ENCODE measurements at regions of chr12 and their contacts with region 1.

Region 1: DNA sequence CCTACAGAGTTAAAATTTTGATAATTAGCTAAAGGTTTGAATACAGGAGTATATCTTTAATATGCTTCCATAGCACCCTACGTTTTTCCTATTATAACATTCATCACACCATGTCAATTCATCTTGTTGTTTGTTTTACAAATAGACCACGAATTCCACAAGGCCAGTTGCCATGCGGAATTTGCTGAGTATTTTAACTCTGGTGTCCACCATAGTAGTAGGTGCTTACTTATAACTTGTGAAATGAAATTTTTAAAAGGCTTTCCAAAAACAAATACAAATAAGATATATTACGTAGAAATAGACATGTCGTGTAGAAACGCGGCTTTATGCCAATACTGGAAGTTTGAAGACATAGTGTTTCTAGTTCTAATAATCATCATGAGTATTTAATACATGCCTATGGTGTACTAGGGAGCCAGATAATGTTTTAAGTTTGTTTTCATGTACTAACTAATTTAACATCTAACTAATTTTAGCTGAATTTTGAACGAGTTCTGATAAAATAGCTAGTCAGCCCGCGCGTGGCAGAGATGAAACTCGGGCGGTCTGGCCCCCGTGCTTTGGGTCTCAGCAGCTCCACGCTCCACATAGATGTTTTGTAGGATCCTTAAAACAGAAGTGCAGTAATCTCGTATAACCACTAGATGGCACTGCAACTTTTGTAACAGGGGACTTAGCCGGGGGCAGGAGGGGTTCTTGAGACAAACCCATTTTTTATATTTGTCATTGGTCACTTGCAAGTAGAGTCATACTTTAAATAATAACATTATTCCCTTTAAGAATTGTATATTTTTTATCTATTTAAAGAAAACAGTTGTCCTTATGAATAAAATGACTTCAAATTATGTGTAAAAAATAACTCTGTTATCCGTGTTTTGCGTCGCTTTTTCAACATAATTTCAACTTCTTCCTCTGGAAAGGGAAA is 10.2 kb downstream of the CD69 start:
- DNase-seq: peak; percentile 68
- H3K4me3 Mint-ChIP-seq: peak overlapping the region; percentile 74
- H3K27ac Mint-ChIP-seq: peak overlapping the region; percentile 71
- H3K4me1 Mint-ChIP-seq: peaks cover 44% of the 10 kb centered on the region
- H3K27me3 Mint-ChIP-seq: no peaks in the 10 kb centered on the region

Region 2: GRCh38 chr12:9331218-9331626 is 419.3 kb before region 1 on chr12:
- CTCF ChIA-PET with region 1: interaction called, 3 read pairs
- intact Hi-C with region 1: loop called (anchors 2 kb)
- DNase-seq: peak; percentile 78
- H3K4me3 Mint-ChIP-seq: no peak overlapping the region
- H3K27ac Mint-ChIP-seq: no peak overlapping the region
- H3K4me1 Mint-ChIP-seq: peaks cover 15% of the 10 kb centered on the region
- H3K27me3 Mint-ChIP-seq: no peaks in the 10 kb centered on the region

Region 3: DNA sequence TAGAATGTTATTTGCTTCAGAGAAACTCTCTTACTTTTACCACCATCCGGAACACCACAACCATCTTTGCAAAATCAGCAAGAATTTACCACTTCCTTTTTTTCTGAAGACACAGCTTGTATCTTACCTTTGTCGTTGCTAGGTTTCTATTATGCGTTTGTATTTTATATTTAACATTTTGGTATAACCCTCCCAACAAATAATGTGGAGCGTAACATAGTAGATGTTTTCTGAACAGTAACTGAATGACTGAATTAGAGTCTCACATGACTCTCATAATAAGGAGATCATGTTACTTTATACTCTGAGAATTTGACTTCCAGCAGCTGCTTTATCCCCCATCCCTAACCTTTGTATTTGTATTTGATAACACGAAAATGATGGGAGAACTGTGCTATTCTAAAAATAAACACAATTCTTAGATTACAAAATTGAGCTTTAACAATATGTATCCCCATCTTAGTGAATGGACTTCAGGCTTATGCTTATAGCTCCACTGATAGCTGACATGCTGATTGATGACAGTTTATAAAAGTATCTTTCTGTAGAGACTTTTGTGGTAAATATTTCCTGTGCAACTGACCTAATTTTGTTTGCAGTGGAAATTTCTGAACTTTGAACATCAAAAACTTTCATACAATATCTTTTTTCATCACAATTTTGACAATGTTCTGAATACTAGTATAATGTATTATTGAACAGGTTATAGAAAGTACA is 135.0 kb before region 1 on chr12:
- CTCF ChIA-PET with region 1: no interaction called
- intact Hi-C with region 1: no loop called
- DNase-seq: no peak
- H3K4me3 Mint-ChIP-seq: peak overlapping the region; percentile 34
- H3K27ac Mint-ChIP-seq: peak overlapping the region; percentile 65
- H3K4me1 Mint-ChIP-seq: peaks cover 54% of the 10 kb centered on the region
- H3K27me3 Mint-ChIP-seq: no peaks in the 10 kb centered on the region

Region 4: DNA sequence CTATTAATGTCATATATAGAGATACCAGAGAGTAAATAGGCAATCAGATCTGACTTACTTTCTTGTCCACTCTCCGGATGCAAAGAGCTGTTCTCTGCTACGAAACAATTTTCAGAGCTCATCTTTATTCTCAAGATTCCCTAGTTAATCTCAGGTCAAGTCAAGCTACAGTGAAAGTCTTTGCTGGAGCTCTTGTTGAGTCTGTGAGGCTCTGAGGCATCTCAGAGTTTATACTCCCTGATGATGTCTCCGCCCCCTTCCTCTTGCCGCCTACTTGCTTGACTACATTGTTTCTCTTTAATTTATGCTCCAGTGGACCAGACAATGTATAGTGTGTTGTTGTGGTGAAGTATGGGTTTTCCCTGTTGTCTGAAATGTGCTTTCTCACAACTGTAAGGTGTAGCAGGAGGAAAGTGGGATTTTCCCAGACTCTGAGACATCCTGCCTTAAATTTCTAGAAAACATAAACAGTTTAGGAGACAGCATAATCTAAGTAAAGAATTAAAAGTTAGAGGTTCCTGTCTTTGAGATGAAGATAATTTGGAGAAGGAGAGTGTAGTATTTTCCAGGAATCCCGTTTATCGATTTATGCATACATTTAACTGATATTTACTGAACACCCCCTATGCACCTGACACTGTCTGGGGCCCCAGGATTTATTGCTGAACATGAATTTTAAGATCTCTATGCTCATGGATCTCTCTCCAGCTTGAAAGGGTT is 10.3 kb after region 1 on chr12 and contains the start of gene CD69:
- CTCF ChIA-PET with region 1: interaction called, 42 read pairs
- intact Hi-C with region 1: loop called (anchors 1 kb)
- DNase-seq: peak; percentile 88
- H3K4me3 Mint-ChIP-seq: peak within 1 kb of the TSS; percentile 95
- H3K27ac Mint-ChIP-seq: peak within 1 kb of the TSS; percentile 99
- H3K4me1 Mint-ChIP-seq: peaks cover 36% of the 10 kb centered on the region
- H3K27me3 Mint-ChIP-seq: no peaks in the 10 kb centered on the region
- total RNA-seq, gene CD69: 150 to 153 TPM

Region 5: DNA sequence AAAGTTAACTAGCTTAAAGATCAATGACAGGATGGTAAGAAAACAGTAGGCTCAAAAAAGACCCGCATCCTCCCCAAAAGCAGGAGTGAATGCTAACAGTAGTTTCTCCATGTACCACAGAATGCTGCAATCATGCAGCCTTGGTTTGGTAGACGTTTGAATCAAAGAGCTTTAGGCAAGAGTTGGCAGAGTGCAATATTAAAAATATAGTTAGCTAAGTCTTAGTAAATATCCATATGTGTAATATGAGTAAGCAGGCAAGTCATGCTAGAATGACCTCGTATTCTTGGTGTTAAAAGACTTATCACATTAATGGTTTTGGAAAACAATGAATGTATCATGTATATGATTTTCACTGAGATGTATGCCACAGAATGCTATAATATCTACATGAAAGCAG is 58.0 kb after region 1 on chr12:
- CTCF ChIA-PET with region 1: interaction called, 537 read pairs
- intact Hi-C with region 1: no loop called
- DNase-seq: no peak
- H3K4me3 Mint-ChIP-seq: no peak overlapping the region
- H3K27ac Mint-ChIP-seq: no peak overlapping the region
- H3K4me1 Mint-ChIP-seq: peaks cover 5% of the 10 kb centered on the region
- H3K27me3 Mint-ChIP-seq: no peaks in the 10 kb centered on the region

Region 6: GRCh38 chr12:9827209-9827888 is 76.8 kb after region 1 on chr12 and contains the start of gene KLRF1:
- CTCF ChIA-PET with region 1: interaction called, 13 read pairs
- intact Hi-C with region 1: no loop called
- DNase-seq: no peak
- H3K4me3 Mint-ChIP-seq: no peak within 1 kb of the TSS
- H3K27ac Mint-ChIP-seq: no peak within 1 kb of the TSS
- H3K4me1 Mint-ChIP-seq: no peaks in the 10 kb centered on the region
- H3K27me3 Mint-ChIP-seq: no peaks in the 10 kb centered on the region
- total RNA-seq, gene KLRF1: not detected

Region 7: DNA sequence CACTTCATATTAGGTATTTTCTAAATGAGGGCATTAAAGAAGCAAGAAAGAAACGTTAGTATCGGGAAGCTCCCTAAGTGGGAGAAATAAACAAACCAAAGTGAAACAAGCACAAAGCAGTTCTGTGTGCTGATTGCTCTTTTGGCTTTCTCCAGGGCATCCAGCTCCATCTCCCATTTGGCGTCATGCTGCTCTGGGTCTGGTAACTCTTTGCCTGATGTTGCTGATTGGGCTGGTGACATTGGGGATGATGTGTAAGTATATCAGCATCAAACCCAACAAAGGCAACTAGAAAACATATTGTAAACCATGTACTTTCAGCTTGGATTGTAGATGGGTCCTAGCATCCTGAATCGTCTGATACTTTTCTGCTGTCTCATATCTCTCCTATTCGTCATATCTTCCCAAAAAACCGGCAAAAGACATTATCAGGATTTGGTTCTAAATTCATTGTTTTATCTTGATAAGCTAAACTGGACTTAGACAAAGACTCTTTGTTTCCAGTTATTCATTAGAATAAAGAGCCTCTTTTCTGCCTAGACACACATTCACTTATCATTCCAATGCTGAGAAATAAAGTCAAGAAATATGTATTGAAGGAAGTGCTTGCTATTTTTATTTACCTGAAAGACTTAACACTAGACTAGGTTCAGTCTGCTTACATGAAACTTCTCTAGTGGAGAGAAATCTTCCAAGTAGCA is 262.2 kb after region 1 on chr12:
- CTCF ChIA-PET with region 1: interaction called, 7 read pairs
- intact Hi-C with region 1: loop called (anchors 1 kb)
- DNase-seq: no peak
- H3K4me3 Mint-ChIP-seq: no peak overlapping the region
- H3K27ac Mint-ChIP-seq: no peak overlapping the region
- H3K4me1 Mint-ChIP-seq: no peaks in the 10 kb centered on the region
- H3K27me3 Mint-ChIP-seq: peaks cover 6% of the 10 kb centered on the region

Region 8: DNA sequence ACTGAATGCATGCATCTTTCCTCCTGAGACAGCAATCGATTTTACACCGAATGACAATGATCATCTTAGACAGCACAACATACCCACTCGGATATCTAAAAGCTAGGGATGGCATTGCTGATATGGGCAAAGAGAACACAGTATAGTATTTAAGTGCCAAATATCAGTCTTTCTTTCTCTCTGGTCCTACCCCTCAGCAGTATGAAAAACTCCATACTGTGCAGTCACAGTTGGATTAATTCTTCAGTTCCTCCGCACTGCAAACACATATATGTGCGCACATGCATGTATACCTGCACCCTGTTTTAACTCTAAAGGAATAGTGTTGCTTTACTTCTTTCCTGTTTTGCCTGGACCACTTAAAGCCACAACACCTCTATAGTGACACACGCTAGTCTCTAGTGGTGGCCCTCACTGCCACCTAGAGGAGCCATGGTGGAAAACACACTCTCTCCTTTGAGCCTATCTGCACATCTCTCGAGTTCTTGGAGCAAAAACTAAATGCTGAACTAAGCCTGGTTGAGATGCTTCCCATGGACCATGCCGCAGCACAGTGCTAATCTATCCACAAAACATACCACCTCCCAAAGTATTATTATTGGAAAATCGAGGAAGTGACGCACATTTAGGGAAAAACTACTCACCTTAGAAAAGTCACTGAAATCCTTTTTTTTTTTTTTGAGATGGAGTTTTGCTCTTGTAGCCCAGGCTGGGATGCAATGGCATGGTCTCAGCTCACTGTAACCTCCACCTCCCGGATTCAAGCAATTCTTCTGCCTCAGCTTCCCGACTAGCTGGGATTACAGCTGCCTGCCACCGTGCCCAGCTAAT is 440.2 kb after region 1 on chr12:
- CTCF ChIA-PET with region 1: no interaction called
- intact Hi-C with region 1: loop called (anchors 1 kb)
- DNase-seq: peak; percentile 74
- H3K4me3 Mint-ChIP-seq: no peak overlapping the region
- H3K27ac Mint-ChIP-seq: no peak overlapping the region
- H3K4me1 Mint-ChIP-seq: peaks cover 4% of the 10 kb centered on the region
- H3K27me3 Mint-ChIP-seq: peaks cover 6% of the 10 kb centered on the region